ENCODE measurements at regions of chr3 and their contacts with region 1.

Region 1: GRCh38 chr3:40971191-40972168 is 227.8 kb upstream of the CTNNB1 start:
- DNase-seq: peak; percentile 38
- ATAC-seq: peak; percentile 80
- H3K4me3 Mint-ChIP-seq: peak overlapping the region; percentile 60
- H3K27ac Mint-ChIP-seq: peak overlapping the region; percentile 98
- H3K4me1 Mint-ChIP-seq: peaks cover 78% of the 10 kb centered on the region
- H3K27me3 Mint-ChIP-seq: no peaks in the 10 kb centered on the region
- CTCF ChIP-seq: no peak

Region 2: DNA sequence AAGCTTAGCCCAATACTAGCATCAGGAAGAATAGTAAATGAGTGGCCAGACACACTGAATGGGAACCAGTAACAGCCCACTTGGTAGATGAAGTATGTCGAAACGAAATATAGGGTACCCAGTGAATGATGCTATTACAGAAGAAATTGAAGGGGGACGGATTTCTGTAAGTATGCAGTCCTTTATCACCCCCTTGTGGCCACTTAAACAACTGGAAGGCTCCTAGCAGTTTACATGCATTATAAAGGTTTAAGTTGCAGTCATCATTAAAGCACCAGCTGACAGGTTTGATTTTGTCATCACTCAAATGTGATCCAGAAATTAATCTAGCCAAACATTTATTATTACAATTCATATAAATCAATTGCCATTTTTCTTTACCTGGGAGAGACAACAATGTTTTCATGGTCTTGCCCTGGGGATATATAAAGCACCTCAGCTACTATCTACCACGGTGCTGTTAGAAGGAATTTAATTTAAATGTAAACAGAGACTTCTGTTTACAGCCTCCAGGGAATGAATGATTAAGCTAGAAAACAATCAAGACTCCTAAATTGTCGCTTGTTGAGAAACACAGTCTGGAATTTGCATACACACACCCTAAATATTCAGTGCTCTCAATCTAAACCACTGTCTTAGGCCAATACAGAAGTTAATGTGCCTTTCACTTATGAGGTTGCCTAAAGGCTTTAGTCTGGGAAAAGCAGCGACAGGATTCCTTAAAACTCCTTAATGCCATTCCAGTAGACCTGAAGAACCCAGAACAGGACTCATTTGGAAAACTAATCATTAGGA is 654.2 kb before region 1 on chr3:
- CTCF ChIA-PET with region 1: no interaction called
- POLR2A ChIA-PET with region 1: no interaction called
- intact Hi-C with region 1: loop called (anchors 10 kb)
- DNase-seq: no peak
- ATAC-seq: peak; percentile 83
- H3K4me3 Mint-ChIP-seq: no peak overlapping the region
- H3K27ac Mint-ChIP-seq: peak overlapping the region; percentile 35
- H3K4me1 Mint-ChIP-seq: peaks cover 6% of the 10 kb centered on the region
- H3K27me3 Mint-ChIP-seq: no peaks in the 10 kb centered on the region
- CTCF ChIP-seq: peak; percentile 36

Region 3: DNA sequence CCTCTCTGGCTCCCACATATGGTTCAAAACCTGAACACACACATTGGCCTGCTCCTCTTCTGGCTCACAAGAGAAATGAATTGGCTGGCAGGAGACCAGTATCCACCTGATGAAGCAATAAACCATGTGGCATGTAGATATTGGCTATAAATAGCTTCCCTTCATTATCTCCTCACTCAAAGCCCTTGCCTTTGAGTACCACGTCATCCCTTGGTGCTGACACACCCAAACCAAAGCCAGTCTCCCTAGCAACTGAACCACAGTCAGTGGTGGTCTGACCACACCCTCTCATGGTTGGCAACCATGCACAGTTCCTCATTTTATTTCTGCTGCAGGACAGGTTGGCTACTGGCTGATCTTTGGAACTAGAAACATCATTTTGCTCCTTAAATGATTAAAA is 347.9 kb before region 1 on chr3:
- CTCF ChIA-PET with region 1: no interaction called
- POLR2A ChIA-PET with region 1: no interaction called
- intact Hi-C with region 1: loop called (anchors 1 kb)
- DNase-seq: peak; percentile 65
- ATAC-seq: peak; percentile 92
- H3K4me3 Mint-ChIP-seq: no peak overlapping the region
- H3K27ac Mint-ChIP-seq: no peak overlapping the region
- H3K4me1 Mint-ChIP-seq: peaks cover 13% of the 10 kb centered on the region
- H3K27me3 Mint-ChIP-seq: no peaks in the 10 kb centered on the region
- CTCF ChIP-seq: no peak

Region 4: DNA sequence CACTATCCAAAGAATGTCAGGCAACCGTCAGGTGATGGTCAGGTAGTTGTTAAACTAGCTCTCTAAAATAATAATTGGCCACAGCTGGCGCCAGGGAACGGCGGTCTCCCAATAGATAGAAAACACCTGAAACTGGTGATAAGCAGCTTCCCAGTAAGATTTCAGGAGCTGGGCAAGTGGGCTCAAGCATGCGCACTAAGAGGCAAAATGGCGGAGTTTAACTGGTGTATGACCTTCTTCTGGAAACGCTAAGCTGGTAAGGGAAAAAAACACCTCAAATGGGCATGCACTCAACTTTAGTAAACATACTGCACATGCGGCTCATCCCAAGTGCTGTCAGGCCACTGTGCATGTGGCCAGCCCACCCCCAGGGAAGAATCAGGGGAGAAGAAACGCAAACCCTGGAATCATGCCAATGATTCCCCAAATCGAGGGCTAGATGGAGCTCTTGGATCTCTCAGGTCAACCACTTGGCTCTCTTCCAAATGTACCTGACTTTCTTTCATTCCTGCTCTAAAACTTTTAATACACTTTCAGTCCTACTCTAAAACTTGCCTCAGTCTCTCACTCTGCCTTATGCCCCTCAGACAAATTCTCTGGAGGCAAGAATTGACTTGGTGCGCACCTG is 251.7 kb before region 1 on chr3:
- CTCF ChIA-PET with region 1: interaction called, 3 read pairs
- POLR2A ChIA-PET with region 1: no interaction called
- intact Hi-C with region 1: loop called (anchors 1 kb)
- DNase-seq: no peak
- ATAC-seq: no peak
- H3K4me3 Mint-ChIP-seq: no peak overlapping the region
- H3K27ac Mint-ChIP-seq: peak overlapping the region; percentile 33
- H3K4me1 Mint-ChIP-seq: peaks cover 34% of the 10 kb centered on the region
- H3K27me3 Mint-ChIP-seq: no peaks in the 10 kb centered on the region
- CTCF ChIP-seq: no peak

Region 5: GRCh38 chr3:40920041-40920440 is 51.4 kb before region 1 on chr3:
- CTCF ChIA-PET with region 1: no interaction called
- POLR2A ChIA-PET with region 1: no interaction called
- intact Hi-C with region 1: loop called (anchors 5 kb)
- DNase-seq: no peak
- ATAC-seq: peak; percentile 31
- H3K4me3 Mint-ChIP-seq: no peak overlapping the region
- H3K27ac Mint-ChIP-seq: no peak overlapping the region
- H3K4me1 Mint-ChIP-seq: peaks cover 10% of the 10 kb centered on the region
- H3K27me3 Mint-ChIP-seq: no peaks in the 10 kb centered on the region
- CTCF ChIP-seq: no peak

Measured in activated B cell treated with CpG ODN at 0.5 μM for 24 hours (primary cell).